Naive thymus-derived CD4-positive, alpha-beta T cell (primary cell): ENCODE measurements at regions of chr14 and their contacts with region 1.

Region 1: GRCh38 chr14:90383075-90383730 is 13.6 kb upstream of the CALM1 start:
- DNase-seq: peak; percentile 93 to 98 (median 96)
- ATAC-seq: peak; percentile 91
- H3K4me3 ChIP-seq: peak overlapping the region; percentile 95
- H3K4me3 Mint-ChIP-seq: no peak overlapping the region
- H3K27ac ChIP-seq: peak overlapping the region; percentile 99
- H3K27ac Mint-ChIP-seq: no peak overlapping the region
- H3K4me1 ChIP-seq: peaks cover 18 to 23% of the 10 kb centered on the region in 2 donors
- H3K4me1 Mint-ChIP-seq: peaks cover 20 to 37% (median 26%) of the 10 kb centered on the region in 7 donors
- H3K27me3 ChIP-seq: no peaks in the 10 kb centered on the region
- H3K27me3 Mint-ChIP-seq: peaks cover 0 to 5% (median 0%) of the 10 kb centered on the region in 5 donors

Region 2: DNA sequence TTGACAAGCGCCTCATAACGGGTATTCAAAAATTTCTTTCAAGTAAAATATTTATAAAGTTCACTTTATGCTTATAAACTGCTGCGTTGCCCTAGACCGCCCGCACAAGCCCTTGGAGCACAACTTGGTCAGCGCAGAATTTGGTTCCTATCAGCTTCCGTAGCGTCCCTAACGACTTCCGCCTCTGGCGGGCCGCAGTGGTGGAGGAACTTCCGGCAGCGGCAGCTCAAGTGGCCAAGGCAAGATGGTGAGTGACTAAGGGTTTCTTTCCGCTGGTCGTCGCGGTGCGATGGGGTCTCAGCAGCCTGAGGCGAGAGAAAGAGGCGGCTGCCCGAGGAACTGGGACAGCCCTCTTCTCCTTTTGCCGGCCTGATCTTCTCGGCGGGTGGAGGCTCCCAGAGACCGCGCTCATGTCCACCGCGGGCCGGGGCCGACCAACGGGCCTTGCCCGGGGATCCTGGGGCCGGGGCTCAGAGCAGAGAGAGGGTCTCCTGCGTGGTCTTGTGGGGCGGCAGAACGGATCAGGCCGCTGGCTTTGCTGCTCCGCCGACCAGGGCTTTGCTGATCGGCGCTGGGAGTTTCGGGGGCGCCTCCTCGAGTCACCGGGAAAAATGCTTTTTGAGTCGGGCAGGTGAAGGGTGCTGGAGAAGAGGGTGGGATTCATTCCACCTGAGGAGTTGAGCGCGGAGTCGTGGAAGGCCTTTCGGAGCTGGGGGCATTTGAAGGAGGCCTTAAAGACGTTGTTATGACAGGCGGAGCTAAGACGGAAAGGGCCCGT is 126.7 kb before region 1 on chr14 and contains the start of gene PSMC1:
- CTCF ChIA-PET with region 1: no interaction called
- POLR2A ChIA-PET with region 1: interaction called, 26 read pairs
- intact Hi-C with region 1: loop called in 1 of 2 experiments (anchors 1 kb)
- DNase-seq: peak; percentile 51 to 89 (median 85)
- ATAC-seq: peak; percentile 97
- H3K4me3 ChIP-seq: peak within 1 kb of the TSS; percentile 87
- H3K4me3 Mint-ChIP-seq: peak within 1 kb of the TSS; percentile 86 to 99 (median 96)
- H3K27ac ChIP-seq: peak within 1 kb of the TSS; percentile 86
- H3K27ac Mint-ChIP-seq: peak within 1 kb of the TSS; percentile 90 to 98 (median 96)
- H3K4me1 ChIP-seq: peaks cover 13 to 17% of the 10 kb centered on the region in 2 donors
- H3K4me1 Mint-ChIP-seq: peaks cover 12 to 39% (median 34%) of the 10 kb centered on the region in 7 donors
- H3K27me3 ChIP-seq: no peaks in the 10 kb centered on the region
- H3K27me3 Mint-ChIP-seq: peaks cover 0 to 10% (median 7%) of the 10 kb centered on the region in 5 donors
- total RNA-seq, gene PSMC1: 47.9 to 101 (median 58.2) TPM

Region 3: DNA sequence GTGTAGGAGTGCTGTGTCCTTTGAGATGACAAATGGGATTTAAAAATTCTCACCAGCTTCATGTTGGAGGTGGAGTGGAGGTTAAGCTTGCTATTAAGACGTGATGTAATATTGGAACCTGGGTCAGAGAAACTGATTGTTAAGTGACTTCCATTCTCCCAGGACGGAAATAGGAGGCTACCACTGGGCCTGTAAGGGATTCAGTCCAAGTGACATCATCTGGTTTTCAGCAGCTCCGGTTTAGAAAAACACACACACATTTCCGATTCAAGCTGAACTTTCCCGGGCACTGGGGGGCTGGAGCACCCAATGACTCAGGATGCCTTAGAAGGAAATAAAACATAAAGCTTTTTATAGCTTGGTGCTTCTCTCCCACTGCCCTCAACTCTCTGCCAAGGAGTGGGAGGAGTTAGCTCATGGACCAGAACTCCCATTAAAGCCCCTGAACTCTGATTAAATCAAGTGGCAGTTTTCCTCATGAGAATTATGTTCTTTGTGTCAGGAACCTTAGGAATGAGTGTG is 26.1 kb after region 1 on chr14:
- CTCF ChIA-PET with region 1: no interaction called
- POLR2A ChIA-PET with region 1: interaction called, 206 read pairs
- intact Hi-C with region 1: no loop called
- DNase-seq: no peak
- ATAC-seq: no peak
- H3K4me3 ChIP-seq: no peak overlapping the region
- H3K4me3 Mint-ChIP-seq: no peak overlapping the region
- H3K27ac ChIP-seq: no peak overlapping the region
- H3K27ac Mint-ChIP-seq: peak overlapping the region in 8 of 9 donors; percentile 16 to 77 (median 62)
- H3K4me1 ChIP-seq: no peaks in the 10 kb centered on the region
- H3K4me1 Mint-ChIP-seq: peaks cover 9 to 43% (median 30%) of the 10 kb centered on the region in 7 donors
- H3K27me3 ChIP-seq: no peaks in the 10 kb centered on the region
- H3K27me3 Mint-ChIP-seq: peaks cover 0 to 3% (median 0%) of the 10 kb centered on the region in 5 donors

Region 4: DNA sequence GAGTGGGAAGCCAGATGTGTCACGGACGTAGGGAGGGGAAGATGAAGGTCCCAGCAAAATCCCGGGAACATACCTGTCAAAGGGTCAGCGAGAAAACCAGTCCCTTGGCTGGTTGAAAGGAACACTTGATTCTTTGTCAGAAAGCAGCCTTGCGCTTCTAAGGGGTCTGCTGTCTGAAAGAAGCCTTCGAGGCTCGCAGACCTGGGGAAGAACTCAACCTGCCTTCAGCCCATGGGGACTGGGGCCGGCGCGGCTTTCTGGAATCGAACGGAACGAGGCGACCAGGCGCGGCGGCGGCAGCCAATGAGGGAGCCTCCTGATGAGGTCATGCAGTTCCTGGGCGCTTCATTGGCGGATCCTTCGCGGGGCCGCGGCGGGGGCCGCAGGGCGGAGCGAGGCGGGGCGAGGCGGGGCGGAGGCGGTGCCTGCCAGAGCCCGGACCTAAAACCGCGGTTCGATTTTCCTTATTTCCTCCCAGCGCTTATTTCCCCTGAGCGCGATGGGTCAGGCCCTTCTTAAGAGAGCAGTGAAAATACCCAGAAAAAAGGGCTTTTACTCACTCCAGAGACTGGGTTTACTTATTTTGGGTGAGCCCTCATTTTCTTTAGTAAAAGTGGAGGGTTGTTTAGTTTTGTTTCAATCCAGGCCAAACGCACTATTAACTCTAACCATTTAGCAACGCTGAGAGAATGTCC is 444.9 kb after region 1 on chr14:
- CTCF ChIA-PET with region 1: interaction called, 4 read pairs
- POLR2A ChIA-PET with region 1: no interaction called
- intact Hi-C with region 1: loop called in 1 of 2 experiments (anchors 1 kb)
- DNase-seq: peak; percentile 83 to 94 (median 85)
- ATAC-seq: peak; percentile 100
- H3K4me3 ChIP-seq: peak overlapping the region; percentile 61
- H3K4me3 Mint-ChIP-seq: peak overlapping the region; percentile 69 to 91 (median 84)
- H3K27ac ChIP-seq: peak overlapping the region; percentile 69
- H3K27ac Mint-ChIP-seq: peak overlapping the region; percentile 79 to 96 (median 86)
- H3K4me1 ChIP-seq: peaks cover 14% of the 10 kb centered on the region in 2 donors
- H3K4me1 Mint-ChIP-seq: peaks cover 7 to 28% (median 18%) of the 10 kb centered on the region in 7 donors
- H3K27me3 ChIP-seq: no peaks in the 10 kb centered on the region
- H3K27me3 Mint-ChIP-seq: peaks cover 0 to 3% (median 0%) of the 10 kb centered on the region in 5 donors

Region 5: DNA sequence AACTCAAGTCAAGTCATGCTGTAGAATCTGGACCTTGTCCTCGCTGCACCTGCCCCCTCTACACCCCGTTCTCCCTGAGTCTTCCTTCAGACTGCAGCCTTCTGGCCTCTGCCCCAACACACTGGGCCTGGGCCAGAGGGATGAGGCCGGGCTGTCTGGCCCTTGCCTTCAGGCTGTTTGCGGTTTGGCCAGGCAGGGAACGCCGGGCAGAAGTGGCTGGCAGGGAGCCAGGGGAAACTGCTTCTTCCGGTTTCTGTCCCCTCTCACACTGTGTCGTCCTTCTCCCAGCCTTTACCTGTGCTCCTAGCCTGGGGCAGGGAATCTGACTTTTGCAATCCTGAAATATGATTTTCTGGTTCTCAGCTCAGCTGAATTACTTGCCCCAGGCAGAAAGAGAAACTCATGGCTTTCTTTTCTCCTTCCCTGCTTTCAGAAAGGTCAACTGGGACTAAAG is 744.2 kb after region 1 on chr14:
- CTCF ChIA-PET with region 1: no interaction called
- POLR2A ChIA-PET with region 1: no interaction called
- intact Hi-C with region 1: no loop called
- DNase-seq: no peak
- ATAC-seq: no peak
- H3K4me3 ChIP-seq: no peak overlapping the region
- H3K4me3 Mint-ChIP-seq: no peak overlapping the region
- H3K27ac ChIP-seq: no peak overlapping the region
- H3K27ac Mint-ChIP-seq: peak overlapping the region in 1 of 9 donors; percentile 31
- H3K4me1 ChIP-seq: peaks cover 0 to 5% of the 10 kb centered on the region in 2 donors
- H3K4me1 Mint-ChIP-seq: peaks cover 0 to 38% (median 29%) of the 10 kb centered on the region in 7 donors
- H3K27me3 ChIP-seq: no peaks in the 10 kb centered on the region
- H3K27me3 Mint-ChIP-seq: no peaks in the 10 kb centered on the region

Region 6: DNA sequence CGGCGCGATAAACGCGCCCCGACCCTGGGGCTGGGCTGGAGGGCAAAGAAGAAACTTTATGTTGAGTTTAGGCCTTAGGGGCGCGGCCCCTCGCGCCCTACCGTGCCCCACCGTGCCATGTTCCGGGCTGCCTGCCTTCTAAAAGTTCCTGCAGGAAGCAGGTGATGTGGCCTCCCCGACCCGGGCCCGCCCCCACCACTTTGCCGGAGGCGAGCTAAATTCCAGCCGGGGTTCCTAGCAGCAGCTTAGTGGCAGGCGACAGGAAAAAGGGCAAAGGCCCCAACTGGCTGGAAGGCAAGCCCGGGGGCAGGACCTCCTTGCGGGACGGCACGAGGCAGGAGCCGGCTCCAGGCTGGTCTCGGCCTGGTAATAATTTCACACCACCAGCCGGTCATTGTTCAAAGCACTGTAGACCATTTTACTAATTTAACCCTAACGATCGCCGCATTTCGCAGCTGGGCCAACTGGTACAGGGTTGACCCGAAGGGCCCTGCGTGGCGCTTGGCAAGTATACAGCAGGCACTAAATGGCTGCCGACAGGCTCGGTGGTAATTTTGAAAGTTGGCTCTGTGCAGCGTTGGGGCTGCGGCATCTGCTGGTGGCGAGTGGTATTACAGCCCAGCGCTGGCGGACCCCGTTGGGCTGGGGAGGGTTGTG is 1035.3 kb after region 1 on chr14:
- CTCF ChIA-PET with region 1: no interaction called
- POLR2A ChIA-PET with region 1: interaction called, 3 read pairs
- intact Hi-C with region 1: loop called in 1 of 2 experiments (anchors 5 kb)
- DNase-seq: peak; percentile 75 to 86 (median 82)
- ATAC-seq: peak; percentile 63
- H3K4me3 ChIP-seq: peak overlapping the region; percentile 52
- H3K4me3 Mint-ChIP-seq: peak overlapping the region; percentile 61 to 91 (median 84)
- H3K27ac ChIP-seq: peak overlapping the region; percentile 97
- H3K27ac Mint-ChIP-seq: peak overlapping the region; percentile 80 to 98 (median 91)
- H3K4me1 ChIP-seq: peaks cover 19 to 25% of the 10 kb centered on the region in 2 donors
- H3K4me1 Mint-ChIP-seq: peaks cover 22 to 42% (median 34%) of the 10 kb centered on the region in 7 donors
- H3K27me3 ChIP-seq: no peaks in the 10 kb centered on the region
- H3K27me3 Mint-ChIP-seq: peaks cover 0 to 7% (median 0%) of the 10 kb centered on the region in 5 donors

Region 7: GRCh38 chr14:92039719-92040430 is 1656.7 kb after region 1 on chr14 and contains the start of gene TRIP11:
- CTCF ChIA-PET with region 1: no interaction called
- POLR2A ChIA-PET with region 1: no interaction called
- intact Hi-C with region 1: loop called in 1 of 2 experiments (anchors 1 kb)
- DNase-seq: peak; percentile 88 to 97 (median 94)
- ATAC-seq: peak; percentile 96
- H3K4me3 ChIP-seq: peak within 1 kb of the TSS; percentile 86
- H3K4me3 Mint-ChIP-seq: peak within 1 kb of the TSS; percentile 91 to 99 (median 96)
- H3K27ac ChIP-seq: peak within 1 kb of the TSS; percentile 84
- H3K27ac Mint-ChIP-seq: peak within 1 kb of the TSS in 7 of 9 donors; percentile 96 to 100 (median 98)
- H3K4me1 ChIP-seq: peaks cover 20 to 21% of the 10 kb centered on the region in 2 donors
- H3K4me1 Mint-ChIP-seq: peaks cover 6 to 50% (median 35%) of the 10 kb centered on the region in 7 donors
- H3K27me3 ChIP-seq: no peaks in the 10 kb centered on the region
- H3K27me3 Mint-ChIP-seq: no peaks in the 10 kb centered on the region
- total RNA-seq, gene TRIP11: 34.1 to 72.4 (median 58.4) TPM